Heart left ventricle (tissue), 16 donors: ENCODE measurements at regions of chr11 and their contacts with region 1.

Region 1: DNA sequence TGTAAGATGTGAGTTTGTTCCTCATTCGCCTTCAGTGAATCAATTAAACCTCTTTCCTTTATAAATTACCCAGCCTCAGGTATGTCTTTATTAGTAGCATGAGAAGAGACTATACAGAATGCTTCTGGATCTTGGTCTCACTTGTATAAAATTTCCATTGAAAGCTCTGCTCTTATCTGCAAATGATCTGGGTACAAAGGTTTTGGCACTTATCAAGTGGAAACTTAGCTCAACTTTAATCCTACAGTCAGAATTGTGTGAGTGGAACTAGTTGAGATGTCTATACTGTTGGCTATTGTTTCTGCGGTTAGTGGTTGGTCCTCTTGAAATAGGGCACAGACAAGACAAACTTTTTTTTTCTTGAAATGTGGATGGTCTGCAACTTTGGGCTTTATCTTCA is 71.2 kb upstream of the CHORDC1 start:
- DNase-seq: no peak
- ATAC-seq: no peak
- H3K4me3 ChIP-seq: no peak overlapping the region
- H3K27ac ChIP-seq: no peak overlapping the region
- H3K4me1 ChIP-seq: no peaks in the 10 kb centered on the region
- H3K27me3 ChIP-seq: no peaks in the 10 kb centered on the region
- CTCF ChIP-seq: no peak
- POLR2A ChIP-seq: no peak

Region 2: GRCh38 chr11:90468923-90469322 is 174.8 kb after region 1 on chr11:
- intact Hi-C with region 1: loop called in 4 of 10 experiments (anchors 5 kb)
- DNase-seq: no peak
- ATAC-seq: peak; percentile 57 to 79 (median 67)
- H3K4me3 ChIP-seq: no peak overlapping the region
- H3K27ac ChIP-seq: no peak overlapping the region
- H3K4me1 ChIP-seq: no peaks in the 10 kb centered on the region
- H3K27me3 ChIP-seq: no peaks in the 10 kb centered on the region
- CTCF ChIP-seq: no peak
- POLR2A ChIP-seq: no peak

Region 3: GRCh38 chr11:90542092-90542491 is 248.0 kb after region 1 on chr11:
- intact Hi-C with region 1: no loop called
- DNase-seq: no peak
- ATAC-seq: peak in 1 of 4 donors; percentile 41
- H3K4me3 ChIP-seq: no peak overlapping the region
- H3K27ac ChIP-seq: no peak overlapping the region
- H3K4me1 ChIP-seq: no peaks in the 10 kb centered on the region
- H3K27me3 ChIP-seq: no peaks in the 10 kb centered on the region
- CTCF ChIP-seq: peak in 6 of 12 donors; percentile 20 to 47 (median 24)
- POLR2A ChIP-seq: no peak